CD14-positive monocyte (primary cell): ENCODE measurements at regions of chr12 and their contacts with region 1.

Region 1: DNA sequence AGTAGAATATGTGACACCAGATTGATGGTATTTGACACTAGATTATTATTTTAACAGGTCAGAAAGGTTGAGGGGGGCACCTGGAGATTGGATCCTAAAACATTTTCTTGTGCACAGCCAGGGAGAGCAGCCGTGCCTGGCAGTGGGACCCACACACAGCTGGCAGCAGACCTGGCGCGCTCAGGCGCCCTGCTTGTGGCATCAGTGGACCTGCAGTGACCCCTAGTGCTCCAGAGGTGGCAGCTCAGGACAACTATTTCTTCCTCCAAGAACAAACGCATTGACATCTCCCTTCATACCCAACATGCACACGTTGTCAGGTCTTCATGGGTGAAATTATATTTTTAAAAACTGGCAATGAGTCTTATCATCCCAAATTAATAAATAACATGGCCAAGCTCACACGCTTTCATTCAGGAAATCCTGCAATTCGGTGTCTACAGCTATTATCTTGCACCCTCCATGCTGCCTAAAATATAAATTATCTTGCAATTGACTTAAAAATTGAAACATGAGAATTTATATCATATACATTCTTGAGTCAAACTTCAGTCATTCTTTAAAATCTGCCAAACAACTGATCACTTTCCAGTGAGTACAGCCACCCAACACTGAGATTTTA is 7.7 kb upstream of the TMEM132D start:
- DNase-seq: no peak
- H3K4me3 ChIP-seq: no peak overlapping the region
- H3K4me3 Mint-ChIP-seq: no peak overlapping the region
- H3K27ac ChIP-seq: no peak overlapping the region
- H3K27ac Mint-ChIP-seq: no peak overlapping the region
- H3K4me1 ChIP-seq: no peaks in the 10 kb centered on the region
- H3K4me1 Mint-ChIP-seq: no peaks in the 10 kb centered on the region
- H3K27me3 ChIP-seq: no peaks in the 10 kb centered on the region
- H3K27me3 Mint-ChIP-seq: peaks cover 1 to 8% (median 2%) of the 10 kb centered on the region in 3 donors
- CTCF ChIP-seq: peak; percentile 68

Region 2: DNA sequence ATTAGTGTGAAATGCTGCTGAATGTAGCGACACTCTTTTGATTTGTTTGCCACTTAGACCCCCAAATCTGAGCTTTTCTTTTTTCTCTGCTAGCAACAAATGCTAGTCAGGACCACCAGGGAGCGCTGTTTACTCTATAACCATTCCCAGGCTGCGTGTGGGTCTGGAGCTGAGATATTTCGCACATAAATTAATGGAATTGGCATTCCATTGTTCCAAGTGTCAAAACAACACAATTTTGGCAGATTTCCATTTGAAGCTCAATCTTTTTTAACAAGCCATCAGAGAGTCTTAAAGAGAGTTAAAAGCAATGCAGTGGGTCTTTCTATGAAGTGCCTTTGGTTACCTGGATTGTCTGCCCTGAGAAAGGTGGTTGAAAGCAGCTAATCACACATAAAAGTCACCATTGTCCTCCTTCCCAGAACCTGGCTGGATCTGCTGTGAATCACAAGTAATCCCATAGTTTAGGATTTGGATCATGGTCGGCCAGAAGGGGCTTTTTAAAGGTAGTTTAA is 1651.9 kb before region 1 on chr12:
- intact Hi-C with region 1: loop called in 1 of 2 experiments (anchors 5 kb)
- DNase-seq: no peak
- H3K4me3 ChIP-seq: no peak overlapping the region
- H3K4me3 Mint-ChIP-seq: no peak overlapping the region
- H3K27ac ChIP-seq: no peak overlapping the region
- H3K27ac Mint-ChIP-seq: no peak overlapping the region
- H3K4me1 ChIP-seq: no peaks in the 10 kb centered on the region
- H3K4me1 Mint-ChIP-seq: no peaks in the 10 kb centered on the region
- H3K27me3 ChIP-seq: no peaks in the 10 kb centered on the region
- H3K27me3 Mint-ChIP-seq: peaks cover 0 to 7% (median 5%) of the 10 kb centered on the region in 3 donors
- CTCF ChIP-seq: peak; percentile 58

Region 3: GRCh38 chr12:128644664-128645296 is 1266.8 kb before region 1 on chr12:
- intact Hi-C with region 1: loop called (anchors 5 to 10 kb)
- DNase-seq: peak in 1 of 3 donors; percentile 3
- H3K4me3 ChIP-seq: no peak overlapping the region
- H3K4me3 Mint-ChIP-seq: no peak overlapping the region
- H3K27ac ChIP-seq: no peak overlapping the region
- H3K27ac Mint-ChIP-seq: no peak overlapping the region
- H3K4me1 ChIP-seq: no peaks in the 10 kb centered on the region
- H3K4me1 Mint-ChIP-seq: no peaks in the 10 kb centered on the region
- H3K27me3 ChIP-seq: no peaks in the 10 kb centered on the region
- H3K27me3 Mint-ChIP-seq: peaks cover 0 to 4% (median 1%) of the 10 kb centered on the region in 3 donors
- CTCF ChIP-seq: peak; percentile 89

Region 4: DNA sequence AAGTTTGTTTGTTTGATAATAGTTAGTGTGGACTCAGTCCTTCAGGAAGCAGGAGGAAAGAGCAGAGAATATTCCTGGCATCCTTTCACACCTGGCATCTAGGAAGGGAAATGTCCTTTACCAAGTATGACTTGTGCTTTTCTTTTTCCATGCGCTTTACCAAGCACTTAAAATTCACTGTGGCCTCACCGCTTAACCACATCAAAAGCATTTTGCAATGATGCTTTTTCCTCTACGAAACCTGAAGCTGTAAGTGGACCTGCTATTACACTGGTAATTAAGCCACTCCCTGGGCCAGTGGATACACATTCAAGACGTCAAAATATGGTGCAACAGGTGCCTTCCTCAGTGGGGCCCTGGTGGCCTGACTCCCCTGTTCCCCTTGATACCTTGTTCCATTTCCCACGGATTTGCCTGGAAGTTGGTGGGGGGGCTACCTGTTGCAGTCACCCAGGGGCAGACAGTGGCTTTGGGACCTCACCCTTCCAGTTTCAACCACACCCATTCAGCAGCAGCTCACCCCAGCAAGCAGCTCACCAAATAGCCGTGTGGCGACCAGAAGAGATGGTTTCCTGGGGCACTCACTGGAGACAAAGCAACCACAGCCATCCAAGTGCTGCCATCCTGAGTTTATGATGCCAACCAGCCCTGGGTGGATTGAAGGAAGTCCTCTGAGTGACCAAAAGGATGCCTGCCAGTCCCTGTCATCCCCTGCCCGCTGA is 236.5 kb after region 1 on chr12:
- intact Hi-C with region 1: no loop called
- DNase-seq: no peak
- H3K4me3 ChIP-seq: no peak overlapping the region
- H3K4me3 Mint-ChIP-seq: no peak overlapping the region
- H3K27ac ChIP-seq: no peak overlapping the region
- H3K27ac Mint-ChIP-seq: no peak overlapping the region
- H3K4me1 ChIP-seq: no peaks in the 10 kb centered on the region
- H3K4me1 Mint-ChIP-seq: no peaks in the 10 kb centered on the region
- H3K27me3 ChIP-seq: no peaks in the 10 kb centered on the region
- H3K27me3 Mint-ChIP-seq: peaks cover 0 to 12% (median 9%) of the 10 kb centered on the region in 3 donors
- CTCF ChIP-seq: no peak